ENCODE measurements at regions of chr2 and their contacts with region 1.

Region 1: GRCh38 chr2:180980106-180980942 is at the start of gene UBE2E3:
- DNase-seq: peak; percentile 86
- ATAC-seq: peak; percentile 64
- H3K4me3 ChIP-seq: peak within 1 kb of the TSS; percentile 81
- H3K27ac ChIP-seq: peak within 1 kb of the TSS; percentile 99
- H3K4me1 ChIP-seq: peaks cover 46% of the 10 kb centered on the region
- H3K27me3 ChIP-seq: no peaks in the 10 kb centered on the region
- CTCF ChIP-seq: peak; percentile 58
- total RNA-seq, gene UBE2E3: 66.6 and 95.6 TPM in 2 replicates

Region 2: DNA sequence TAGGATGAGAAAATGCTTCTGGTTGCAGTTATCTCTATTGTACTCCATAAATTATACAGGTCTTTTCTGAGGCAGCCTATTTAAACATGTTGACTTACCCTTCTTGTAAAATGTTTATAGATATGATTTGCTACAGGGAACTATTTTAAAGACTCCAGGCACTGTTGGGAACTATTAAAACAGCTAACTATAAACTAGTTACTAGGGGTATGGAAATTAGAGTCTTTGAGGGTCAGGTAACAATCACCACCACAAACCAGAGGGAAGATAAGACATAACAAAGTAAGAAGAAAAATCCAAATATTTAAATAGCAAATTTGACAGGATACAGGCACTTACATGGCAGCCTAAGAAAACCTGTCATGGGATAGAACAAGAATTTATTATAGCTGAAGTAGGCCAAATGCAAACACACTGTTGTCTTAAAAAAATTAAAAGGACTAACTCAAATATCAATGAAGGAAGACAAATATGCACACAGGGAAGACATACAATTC is 722.2 kb before region 1 on chr2:
- CTCF ChIA-PET with region 1: no interaction called
- POLR2A ChIA-PET with region 1: no interaction called
- intact Hi-C with region 1: loop called (anchors 5 kb)
- DNase-seq: peak; percentile 62
- ATAC-seq: peak; percentile 83
- H3K4me3 ChIP-seq: no peak overlapping the region
- H3K27ac ChIP-seq: peak overlapping the region; percentile 84
- H3K4me1 ChIP-seq: peaks cover 28% of the 10 kb centered on the region
- H3K27me3 ChIP-seq: no peaks in the 10 kb centered on the region
- CTCF ChIP-seq: no peak

Region 3: GRCh38 chr2:180520206-180520605 is 460.1 kb before region 1 on chr2:
- CTCF ChIA-PET with region 1: interaction called, 12 read pairs
- POLR2A ChIA-PET with region 1: interaction called, 6 read pairs
- intact Hi-C with region 1: loop called (anchors 1 kb)
- DNase-seq: peak; percentile 56
- ATAC-seq: peak; percentile 32
- H3K4me3 ChIP-seq: no peak overlapping the region
- H3K27ac ChIP-seq: peak overlapping the region; percentile 96
- H3K4me1 ChIP-seq: peaks cover 73% of the 10 kb centered on the region
- H3K27me3 ChIP-seq: no peaks in the 10 kb centered on the region
- CTCF ChIP-seq: peak; percentile 52

Region 4: GRCh38 chr2:180690611-180691010 is 289.7 kb before region 1 on chr2:
- CTCF ChIA-PET with region 1: no interaction called
- POLR2A ChIA-PET with region 1: interaction called, 20 read pairs
- intact Hi-C with region 1: loop called (anchors 2 kb)
- DNase-seq: peak; percentile 76
- ATAC-seq: peak; percentile 45
- H3K4me3 ChIP-seq: no peak overlapping the region
- H3K27ac ChIP-seq: peak overlapping the region; percentile 31
- H3K4me1 ChIP-seq: peaks cover 38% of the 10 kb centered on the region
- H3K27me3 ChIP-seq: no peaks in the 10 kb centered on the region
- CTCF ChIP-seq: no peak

Region 5: GRCh38 chr2:180742809-180743208 is 237.5 kb before region 1 on chr2:
- CTCF ChIA-PET with region 1: no interaction called
- POLR2A ChIA-PET with region 1: interaction called, 18 read pairs
- intact Hi-C with region 1: no loop called
- DNase-seq: peak; percentile 87
- ATAC-seq: peak; percentile 85
- H3K4me3 ChIP-seq: peak overlapping the region; percentile 34
- H3K27ac ChIP-seq: peak overlapping the region; percentile 86
- H3K4me1 ChIP-seq: peaks cover 37% of the 10 kb centered on the region
- H3K27me3 ChIP-seq: no peaks in the 10 kb centered on the region
- CTCF ChIP-seq: no peak

Region 6: DNA sequence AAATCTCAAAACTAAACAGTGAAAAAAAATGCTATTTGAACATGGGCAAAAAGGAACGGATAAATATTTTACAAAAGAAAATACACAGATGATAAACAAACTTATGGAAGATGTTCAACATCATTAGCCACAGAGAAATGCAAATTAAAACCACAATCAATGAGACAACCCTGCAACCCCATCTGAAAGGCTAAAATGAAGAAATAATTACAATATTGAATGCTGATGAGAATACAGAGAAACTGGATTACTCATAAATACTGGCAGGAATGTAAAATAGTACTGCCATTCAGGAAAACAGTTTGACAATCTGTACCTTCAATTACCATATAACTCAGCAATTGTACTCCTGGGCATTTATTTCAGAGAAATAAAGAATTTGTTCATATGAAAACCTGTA is 193.0 kb before region 1 on chr2:
- CTCF ChIA-PET with region 1: no interaction called
- POLR2A ChIA-PET with region 1: no interaction called
- intact Hi-C with region 1: loop called (anchors 1 kb)
- DNase-seq: peak; percentile 72
- ATAC-seq: peak; percentile 96
- H3K4me3 ChIP-seq: no peak overlapping the region
- H3K27ac ChIP-seq: peak overlapping the region; percentile 48
- H3K4me1 ChIP-seq: peaks cover 15% of the 10 kb centered on the region
- H3K27me3 ChIP-seq: no peaks in the 10 kb centered on the region
- CTCF ChIP-seq: no peak

Region 7: DNA sequence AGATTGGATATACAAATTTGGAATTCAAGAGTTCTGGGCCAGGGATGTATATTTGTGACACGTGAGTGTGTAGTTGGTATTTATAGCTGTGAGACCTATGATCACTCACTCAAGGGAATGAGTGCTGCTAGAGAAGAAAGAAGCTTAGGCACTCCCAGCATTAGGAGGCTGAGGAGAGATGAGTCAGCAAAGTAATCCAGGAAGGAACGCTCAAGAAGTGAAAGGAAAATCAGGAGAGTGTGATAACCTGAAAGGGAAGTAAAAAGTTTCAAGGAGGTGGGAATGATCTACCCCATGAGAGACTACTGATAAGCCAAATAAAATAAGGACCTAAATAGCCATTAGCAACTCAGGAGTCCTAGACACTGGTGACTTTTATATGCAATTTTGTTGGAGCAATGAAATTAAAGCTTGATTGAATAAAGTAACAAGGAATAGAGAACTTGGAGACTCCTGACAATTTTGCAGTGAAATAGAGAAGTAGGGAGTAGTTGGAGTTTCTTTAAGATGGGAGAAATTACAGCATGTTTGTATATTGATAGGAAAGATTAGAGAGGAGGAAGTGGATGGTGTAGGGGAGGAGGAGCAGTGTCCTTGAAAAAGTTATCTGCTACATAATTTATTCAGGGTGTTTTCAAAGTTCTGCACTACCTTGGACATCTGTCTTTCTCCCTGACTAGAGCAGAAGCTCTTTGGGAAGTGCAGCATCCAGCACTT is 90.0 kb after region 1 on chr2:
- CTCF ChIA-PET with region 1: no interaction called
- POLR2A ChIA-PET with region 1: interaction called, 16 read pairs
- intact Hi-C with region 1: no loop called
- DNase-seq: peak; percentile 69
- ATAC-seq: peak; percentile 81
- H3K4me3 ChIP-seq: no peak overlapping the region
- H3K27ac ChIP-seq: peak overlapping the region; percentile 6; the same call in 1 of the 2 replicates
- H3K4me1 ChIP-seq: peaks cover 15% of the 10 kb centered on the region
- H3K27me3 ChIP-seq: no peaks in the 10 kb centered on the region
- CTCF ChIP-seq: no peak